AG04450 (cell line): ENCODE measurements at regions of chr5 and their contacts with region 1.

Region 1: GRCh38 chr5:40871177-40871576 is 30.0 kb downstream of the CARD6 start:
- DNase-seq: no peak
- H3K4me3 ChIP-seq: no peak overlapping the region
- H3K27ac ChIP-seq: no peak overlapping the region
- H3K27me3 ChIP-seq: peaks cover 2% of the 10 kb centered on the region
- CTCF ChIP-seq: no peak

Region 2: DNA sequence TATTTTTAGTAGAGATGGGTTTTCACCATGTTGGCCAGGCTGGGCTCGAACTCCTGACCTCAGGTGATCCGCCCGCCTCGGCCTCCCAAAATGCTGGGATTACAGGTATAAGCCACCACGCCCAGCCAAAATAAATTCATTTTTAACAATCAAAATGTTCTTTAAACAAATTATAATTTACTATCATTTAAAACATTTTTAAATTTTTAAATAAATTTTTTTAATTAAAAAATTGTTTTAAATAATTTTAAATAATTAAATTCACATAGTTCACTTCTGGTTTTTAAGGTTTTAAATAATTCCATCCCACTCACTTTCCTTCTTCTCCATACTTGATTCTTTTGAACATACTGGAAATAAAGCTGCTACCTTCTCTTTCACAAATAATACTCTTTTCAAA is 100.4 kb before region 1 on chr5:
- CTCF ChIA-PET with region 1: no interaction called
- POLR2A ChIA-PET with region 1: interaction called, 12 read pairs
- DNase-seq: no peak
- H3K4me3 ChIP-seq: no peak overlapping the region
- H3K27ac ChIP-seq: no peak overlapping the region
- H3K27me3 ChIP-seq: no peaks in the 10 kb centered on the region
- CTCF ChIP-seq: no peak